ENCODE measurements at regions of chr10 and their contacts with region 1.

Region 1: GRCh38 chr10:68897336-68897741 is 3.8 kb upstream of the DDX50 start:
- DNase-seq: peak; percentile 53
- H3K4me3 ChIP-seq: no peak overlapping the region
- H3K27ac ChIP-seq: no peak overlapping the region
- H3K4me1 ChIP-seq: peaks cover 0 to 17% (median 10%) of the 10 kb centered on the region in 4 donors
- H3K27me3 ChIP-seq: no peaks in the 10 kb centered on the region
- CTCF ChIP-seq: peak; percentile 28 to 60 (median 46)
- EP300 ChIP-seq: no peak
- POLR2A ChIP-seq: no peak

Region 2: GRCh38 chr10:68550747-68551411 is 346.5 kb before region 1 on chr10:
- in situ Hi-C with region 1: loop called in 2 of 4 experiments (anchors 25 kb)
- intact Hi-C with region 1: no loop called
- DNase-seq: peak; percentile 60
- H3K4me3 ChIP-seq: no peak overlapping the region
- H3K27ac ChIP-seq: no peak overlapping the region
- H3K4me1 ChIP-seq: no peaks in the 10 kb centered on the region
- H3K27me3 ChIP-seq: no peaks in the 10 kb centered on the region
- CTCF ChIP-seq: peak; percentile 69 to 77 (median 76)
- EP300 ChIP-seq: no peak
- POLR2A ChIP-seq: no peak

Region 3: GRCh38 chr10:68784476-68784875 is 112.9 kb before region 1 on chr10:
- in situ Hi-C with region 1: loop called in 1 of 4 experiments (anchors 10 kb)
- intact Hi-C with region 1: no loop called
- DNase-seq: no peak
- H3K4me3 ChIP-seq: no peak overlapping the region
- H3K27ac ChIP-seq: no peak overlapping the region
- H3K4me1 ChIP-seq: no peaks in the 10 kb centered on the region
- H3K27me3 ChIP-seq: no peaks in the 10 kb centered on the region
- CTCF ChIP-seq: no peak
- EP300 ChIP-seq: no peak
- POLR2A ChIP-seq: no peak

Region 4: GRCh38 chr10:68792115-68792514 is 105.2 kb before region 1 on chr10:
- in situ Hi-C with region 1: loop called in 2 of 4 experiments (anchors 10 kb)
- intact Hi-C with region 1: no loop called
- DNase-seq: no peak
- H3K4me3 ChIP-seq: no peak overlapping the region
- H3K27ac ChIP-seq: no peak overlapping the region
- H3K4me1 ChIP-seq: no peaks in the 10 kb centered on the region
- H3K27me3 ChIP-seq: no peaks in the 10 kb centered on the region
- CTCF ChIP-seq: peak in 1 of 5 experiments; percentile 10
- EP300 ChIP-seq: no peak
- POLR2A ChIP-seq: no peak

Region 5: GRCh38 chr10:68826764-68827591 is 70.4 kb before region 1 on chr10 and contains the start of gene STOX1:
- in situ Hi-C with region 1: no loop called
- intact Hi-C with region 1: loop called (anchors 10 kb)
- DNase-seq: peak; percentile 71
- H3K4me3 ChIP-seq: peak within 1 kb of the TSS; percentile 51 to 61 (median 54)
- H3K27ac ChIP-seq: peak within 1 kb of the TSS; percentile 39 to 75 (median 64)
- H3K4me1 ChIP-seq: peaks cover 0 to 12% (median 8%) of the 10 kb centered on the region in 4 donors
- H3K27me3 ChIP-seq: no peaks in the 10 kb centered on the region
- CTCF ChIP-seq: no peak
- EP300 ChIP-seq: no peak
- POLR2A ChIP-seq: no peak
- total RNA-seq, gene STOX1: 0.40 to 2.0 (median 1.4) TPM